HepG2 (cell line): ENCODE measurements at regions of chr14 and their contacts with region 1.

Region 1: GRCh38 chr14:75230140-75231045 is 48.2 kb upstream of the FOS start:
- DNase-seq: no peak
- ATAC-seq: peak; percentile 71
- H3K4me3 ChIP-seq: no peak overlapping the region
- H3K27ac ChIP-seq: no peak overlapping the region
- H3K4me1 ChIP-seq: peaks cover 22% of the 10 kb centered on the region
- H3K27me3 ChIP-seq: peaks cover 2 to 11% of the 10 kb centered on the region in 2 experiments; a peak in 3 of 5 replicates
- CTCF ChIP-seq: no peak
- EP300 ChIP-seq: no peak
- POLR2A ChIP-seq: no peak
- RAD21 ChIP-seq: no peak

Region 2: GRCh38 chr14:75258615-75259466 is 28.4 kb after region 1 on chr14:
- CTCF ChIA-PET with region 1: no interaction called
- POLR2A ChIA-PET with region 1: no interaction called
- in situ Hi-C with region 1: no loop called
- intact Hi-C with region 1: no loop called
- DNase-seq: peak; percentile 96
- ATAC-seq: peak; percentile 90
- H3K4me3 ChIP-seq: peak overlapping the region; percentile 51 to 76 (median 62)
- H3K27ac ChIP-seq: peak overlapping the region; percentile 80
- H3K4me1 ChIP-seq: peaks cover 49% of the 10 kb centered on the region
- H3K27me3 ChIP-seq: peaks cover 0 to 18% of the 10 kb centered on the region in 2 experiments; a peak in 2 of 5 replicates
- CTCF ChIP-seq: peak; percentile 14; the same call in 1 of the 2 replicates
- EP300 ChIP-seq: peak; percentile 86 to 98
- POLR2A ChIP-seq: peak in 1 of 2 experiments; percentile 82; a peak in 2 of 4 replicates
- RAD21 ChIP-seq: no peak

Region 3: GRCh38 chr14:75896341-75896740 is 665.9 kb after region 1 on chr14:
- CTCF ChIA-PET with region 1: no interaction called
- POLR2A ChIA-PET with region 1: no interaction called
- in situ Hi-C with region 1: no loop called
- intact Hi-C with region 1: loop called (anchors 10 kb)
- DNase-seq: no peak
- ATAC-seq: no peak
- H3K4me3 ChIP-seq: no peak overlapping the region
- H3K27ac ChIP-seq: no peak overlapping the region
- H3K4me1 ChIP-seq: no peaks in the 10 kb centered on the region
- H3K27me3 ChIP-seq: no peaks in the 10 kb centered on the region
- CTCF ChIP-seq: no peak
- EP300 ChIP-seq: no peak
- POLR2A ChIP-seq: no peak
- RAD21 ChIP-seq: no peak